Colonic mucosa (tissue), 4 donors: ENCODE measurements at regions of chr2 and their contacts with region 1.

Region 1: DNA sequence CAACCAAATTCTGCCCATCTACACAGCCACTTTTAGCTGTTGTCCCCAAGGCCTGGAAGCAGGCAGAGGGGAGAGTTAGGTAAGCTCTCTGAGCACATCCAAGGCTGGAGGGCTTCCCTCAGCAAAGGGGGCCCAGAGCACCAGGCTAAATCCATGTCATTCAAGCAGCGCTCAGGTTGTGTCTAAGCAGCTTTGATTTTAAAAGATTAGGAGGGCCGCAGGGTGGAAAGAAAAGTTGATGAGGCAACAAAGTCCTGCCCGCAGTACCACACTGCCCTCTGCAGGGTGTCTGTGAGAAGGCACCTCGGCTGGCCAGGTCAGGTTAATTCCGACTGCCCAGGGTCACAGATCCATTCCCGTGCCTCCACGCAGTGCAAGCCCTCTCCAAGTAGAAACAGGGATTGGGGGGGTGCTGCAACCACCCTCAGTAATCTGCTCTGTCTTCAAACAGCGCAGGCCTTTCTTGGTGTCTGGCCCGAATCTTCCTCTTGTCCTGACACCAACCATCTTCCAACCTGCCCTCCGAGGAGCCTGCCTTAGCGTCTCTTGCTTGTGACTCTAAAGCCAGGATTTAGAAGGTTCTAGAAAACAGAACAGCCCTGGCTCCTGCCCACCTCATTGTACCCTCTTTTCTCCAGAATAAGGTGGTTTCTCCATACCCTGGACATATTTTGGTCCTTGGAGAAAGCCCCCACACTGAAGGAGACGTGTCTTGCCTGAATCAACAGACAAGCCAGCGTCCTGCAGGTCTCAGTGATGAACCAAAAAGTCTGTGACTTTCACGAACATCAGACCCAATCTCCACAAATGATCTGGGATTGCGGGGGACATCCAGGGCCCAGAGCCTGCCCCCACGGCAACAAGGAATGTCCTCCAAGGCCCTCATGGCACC is 289.2 kb downstream of the TNS1 start:
- DNase-seq: peak; percentile 77
- H3K4me3 ChIP-seq: no peak overlapping the region
- H3K27ac ChIP-seq: no peak overlapping the region
- H3K4me1 ChIP-seq: no peaks in the 10 kb centered on the region
- H3K27me3 ChIP-seq: no peaks in the 10 kb centered on the region
- CTCF ChIP-seq: peak; percentile 86

Region 2: DNA sequence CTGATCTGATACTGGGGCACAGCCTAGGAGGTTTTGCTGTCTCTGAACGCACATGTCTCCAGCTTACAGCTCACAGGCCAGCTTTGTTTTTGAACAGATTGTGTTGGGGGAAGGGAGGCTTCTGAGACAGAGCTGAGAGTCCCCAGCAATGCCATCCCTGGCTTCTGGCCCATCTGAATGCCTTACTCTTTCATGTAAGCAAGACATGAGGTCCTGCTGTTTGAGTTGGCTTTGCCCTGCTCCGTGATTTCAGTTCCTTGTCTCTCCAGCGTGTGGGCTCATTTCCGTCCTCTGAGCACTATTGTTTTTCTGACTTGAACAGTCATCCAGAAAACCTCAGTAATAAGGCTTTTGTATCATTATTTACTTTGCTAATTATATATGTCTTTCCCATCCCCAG is 658.9 kb before region 1 on chr2:
- intact Hi-C with region 1: no loop called
- DNase-seq: no peak
- H3K4me3 ChIP-seq: no peak overlapping the region
- H3K27ac ChIP-seq: no peak overlapping the region
- H3K4me1 ChIP-seq: no peaks in the 10 kb centered on the region
- H3K27me3 ChIP-seq: no peaks in the 10 kb centered on the region
- CTCF ChIP-seq: no peak

Region 3: DNA sequence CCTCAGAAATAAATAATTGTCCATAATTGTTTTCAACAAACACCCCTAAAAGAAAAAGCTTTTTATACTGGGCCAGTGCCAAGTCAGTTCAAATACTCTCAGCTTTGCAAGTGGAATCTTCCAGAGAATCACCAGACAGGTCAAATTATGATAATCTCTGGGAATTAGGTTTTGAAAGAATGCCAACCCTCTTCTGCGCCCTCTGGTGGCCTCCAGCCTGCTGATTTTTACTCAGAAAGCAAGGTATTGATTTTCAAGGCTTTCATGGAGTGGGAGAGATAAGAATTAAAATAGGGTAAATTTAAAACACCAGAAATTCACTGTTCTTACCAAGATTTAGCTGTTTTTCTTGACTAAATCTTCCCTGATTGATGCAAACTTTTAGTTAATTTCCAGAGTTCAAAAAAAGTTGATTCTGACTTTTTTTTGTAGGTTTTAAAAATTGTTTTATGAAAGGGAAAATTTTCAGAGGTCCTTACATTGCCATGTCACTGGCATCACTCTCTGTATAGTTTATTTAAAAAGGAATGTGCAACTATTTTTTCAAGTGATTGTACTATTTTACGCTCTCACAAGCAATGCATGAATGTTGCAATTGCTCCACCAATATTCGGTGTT is 570.9 kb before region 1 on chr2:
- intact Hi-C with region 1: loop called (anchors 10 kb)
- DNase-seq: peak; percentile 22
- H3K4me3 ChIP-seq: no peak overlapping the region
- H3K27ac ChIP-seq: no peak overlapping the region
- H3K4me1 ChIP-seq: no peaks in the 10 kb centered on the region
- H3K27me3 ChIP-seq: no peaks in the 10 kb centered on the region
- CTCF ChIP-seq: peak; percentile 49

Region 4: DNA sequence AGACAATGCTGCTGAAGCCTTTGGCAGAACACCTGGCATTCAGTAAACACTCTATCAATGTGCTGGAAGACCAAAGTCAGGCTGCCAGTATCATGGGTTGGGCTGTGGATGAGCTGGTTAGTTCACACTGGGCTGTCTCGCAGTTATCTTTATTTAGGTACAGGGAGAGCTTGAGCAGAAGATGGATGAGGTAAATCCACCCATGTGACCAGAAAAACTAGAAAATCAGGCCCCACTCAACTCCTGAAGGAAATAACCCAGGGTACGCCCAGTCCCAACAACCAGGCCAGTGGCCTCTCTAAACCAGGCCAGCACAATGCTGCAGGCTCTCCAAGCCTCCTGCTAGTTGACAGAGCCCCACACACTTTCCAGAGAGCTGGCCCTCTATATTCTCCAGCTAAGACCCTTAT is 41.1 kb before region 1 on chr2:
- intact Hi-C with region 1: no loop called
- DNase-seq: no peak
- H3K4me3 ChIP-seq: no peak overlapping the region
- H3K27ac ChIP-seq: no peak overlapping the region
- H3K4me1 ChIP-seq: no peaks in the 10 kb centered on the region
- H3K27me3 ChIP-seq: no peaks in the 10 kb centered on the region
- CTCF ChIP-seq: no peak

Region 5: DNA sequence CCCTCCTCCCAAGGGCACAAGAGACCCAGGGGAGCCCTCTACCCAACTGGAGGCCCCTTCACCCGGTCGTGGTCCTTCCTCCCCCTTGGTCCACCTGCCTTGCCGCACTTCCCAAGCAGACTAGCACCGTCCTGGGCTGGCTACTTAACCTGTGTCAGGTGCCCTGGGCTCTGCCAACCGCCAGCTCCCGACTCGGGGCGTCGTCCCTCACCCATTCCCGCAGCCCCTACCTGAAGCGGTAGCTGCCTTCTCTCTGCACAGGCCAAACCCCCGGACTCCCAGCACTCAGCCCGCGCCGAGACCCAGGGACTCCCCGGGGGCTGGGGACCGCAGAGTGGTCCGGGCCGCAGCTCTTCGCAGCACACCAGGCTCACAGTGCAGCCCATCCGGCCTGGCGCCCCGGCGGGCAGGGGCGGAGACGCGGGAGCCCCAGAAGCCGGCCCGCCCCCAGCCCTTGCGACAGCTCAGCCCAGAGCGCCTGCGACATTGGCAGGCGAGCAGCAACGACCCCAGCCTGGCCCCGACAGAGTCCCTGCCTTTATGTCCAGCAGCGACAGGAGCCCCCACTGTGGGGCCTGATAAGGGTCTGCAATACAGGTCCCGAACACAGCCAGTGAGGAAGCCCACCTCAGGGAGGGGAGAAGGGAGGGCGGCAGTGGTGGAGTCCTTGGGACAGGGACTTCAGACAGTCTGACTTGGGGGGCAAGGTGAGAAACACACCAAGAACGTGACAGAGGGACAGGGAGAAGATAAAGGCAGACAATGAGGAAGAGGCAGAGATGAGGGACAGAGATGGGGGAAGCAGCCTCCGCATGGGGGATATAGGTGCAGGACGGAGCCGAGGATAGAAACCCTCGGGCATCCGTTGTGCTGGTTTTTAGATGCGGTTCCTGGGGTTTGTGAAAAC is 320.2 kb after region 1 on chr2:
- intact Hi-C with region 1: no loop called
- DNase-seq: peak; percentile 17
- H3K4me3 ChIP-seq: peak overlapping the region; percentile 9
- H3K27ac ChIP-seq: no peak overlapping the region
- H3K4me1 ChIP-seq: no peaks in the 10 kb centered on the region
- H3K27me3 ChIP-seq: no peaks in the 10 kb centered on the region
- CTCF ChIP-seq: no peak